ENCODE measurements at regions of chr2 and their contacts with region 1.

Region 1: GRCh38 chr2:216775043-216775453 is 79.7 kb upstream of the IGFBP5 start:
- DNase-seq: peak; percentile 93 to 97
- ATAC-seq: peak; percentile 88 to 93
- H3K4me3 ChIP-seq: no peak overlapping the region
- H3K27ac ChIP-seq: peak overlapping the region; percentile 94 to 98 (median 96)
- H3K4me1 ChIP-seq: peaks cover 35 to 37% of the 10 kb centered on the region in 2 donors
- H3K27me3 ChIP-seq: no peaks in the 10 kb centered on the region
- CTCF ChIP-seq: peak in 2 of 5 experiments; percentile 21 to 23
- POLR2A ChIP-seq: peak in 1 of 2 donors; percentile 10

Region 2: DNA sequence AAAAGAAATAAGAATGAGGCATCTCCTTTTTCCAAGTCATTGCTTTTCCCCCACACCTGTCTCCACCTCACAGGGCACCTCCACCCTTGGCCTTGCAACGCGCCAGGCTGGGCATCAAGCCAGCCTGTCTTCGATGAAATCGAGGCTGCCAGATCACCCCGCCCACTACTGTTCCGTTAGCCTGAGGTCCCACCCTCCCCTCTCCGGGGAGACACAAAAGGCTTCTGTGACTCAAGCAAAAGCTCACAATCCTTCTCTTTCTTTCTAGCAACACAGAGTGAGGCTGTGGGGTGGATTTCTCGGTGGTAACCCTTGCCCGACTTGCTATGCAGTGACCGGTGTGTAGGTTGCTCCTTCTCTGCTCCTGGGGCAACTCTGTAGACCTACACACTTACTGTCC is 74.9 kb after region 1 on chr2:
- in situ Hi-C with region 1: no loop called
- intact Hi-C with region 1: no loop called
- DNase-seq: peak; percentile 32 to 43
- ATAC-seq: peak in 1 of 2 donors; percentile 68
- H3K4me3 ChIP-seq: no peak overlapping the region
- H3K27ac ChIP-seq: no peak overlapping the region
- H3K4me1 ChIP-seq: peaks cover 0 to 20% of the 10 kb centered on the region in 2 donors
- H3K27me3 ChIP-seq: no peaks in the 10 kb centered on the region
- CTCF ChIP-seq: no peak
- POLR2A ChIP-seq: no peak

Region 3: GRCh38 chr2:216888907-216889622 is 114.0 kb after region 1 on chr2:
- in situ Hi-C with region 1: no loop called
- intact Hi-C with region 1: loop called (anchors 2 kb)
- DNase-seq: peak; percentile 86 to 94
- ATAC-seq: peak; percentile 67
- H3K4me3 ChIP-seq: peak overlapping the region in 1 of 4 donors; percentile 11
- H3K27ac ChIP-seq: peak overlapping the region; percentile 87 to 95 (median 90)
- H3K4me1 ChIP-seq: peaks cover 50 to 55% of the 10 kb centered on the region in 2 donors
- H3K27me3 ChIP-seq: no peaks in the 10 kb centered on the region
- CTCF ChIP-seq: no peak
- POLR2A ChIP-seq: peak; percentile 20 to 34